Transverse colon (tissue), 4 donors: ENCODE measurements at regions of chr5 and their contacts with region 1.

Region 1: GRCh38 chr5:159993194-159993593 is 15.7 kb upstream of the TTC1 start:
- DNase-seq: no peak
- H3K4me3 ChIP-seq: no peak overlapping the region
- H3K27ac ChIP-seq: no peak overlapping the region
- H3K4me1 ChIP-seq: no peaks in the 10 kb centered on the region
- H3K27me3 ChIP-seq: peaks cover 20% of the 10 kb centered on the region
- CTCF ChIP-seq: no peak
- EP300 ChIP-seq: no peak
- POLR2A ChIP-seq: no peak

Region 2: DNA sequence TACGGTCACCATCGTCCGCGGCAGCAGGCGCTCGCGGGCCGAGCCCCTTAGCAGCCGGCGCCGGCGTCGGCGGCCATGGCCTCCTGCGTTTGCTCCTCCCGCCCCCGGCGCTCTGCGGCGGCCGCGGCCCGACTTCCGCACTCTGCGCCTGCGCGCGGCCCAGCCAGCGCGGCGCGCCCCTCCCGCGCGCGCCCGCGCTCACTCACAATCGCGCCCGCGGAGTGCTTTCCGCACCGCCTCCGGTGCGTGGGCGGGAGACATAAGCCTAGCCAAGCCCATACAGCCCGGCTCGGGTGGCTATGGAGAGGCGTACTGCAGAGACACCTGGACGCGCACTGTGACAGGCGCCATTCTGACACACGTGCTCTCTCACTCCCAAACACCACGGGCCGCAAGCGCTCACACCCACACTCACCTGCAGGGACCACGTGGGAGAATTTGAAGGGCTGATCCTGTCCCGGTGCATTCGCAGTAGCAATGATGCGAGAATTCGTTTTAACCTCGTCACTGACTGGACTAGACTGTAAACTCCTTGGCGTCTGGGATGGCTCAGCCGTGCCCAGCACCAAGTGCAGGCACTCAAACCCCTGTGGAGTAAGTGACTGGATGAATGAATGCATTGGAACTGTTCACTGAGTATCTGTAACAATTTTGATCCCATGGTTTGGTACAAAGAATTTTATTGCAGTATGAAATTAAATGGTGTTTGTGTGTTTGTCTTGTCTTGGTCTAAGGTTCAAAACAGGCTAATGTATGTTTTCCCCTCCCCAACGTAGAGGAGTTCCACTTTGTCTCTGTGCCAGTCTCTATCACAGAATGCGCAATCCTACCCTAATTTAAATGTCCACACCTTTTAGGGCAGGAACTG is 783.5 kb before region 1 on chr5 and contains the start of gene RNF145:
- in situ Hi-C with region 1: no loop called
- intact Hi-C with region 1: no loop called
- DNase-seq: peak; percentile 89
- H3K4me3 ChIP-seq: peak within 1 kb of the TSS; percentile 89 to 99 (median 98)
- H3K27ac ChIP-seq: peak within 1 kb of the TSS; percentile 96 to 99 (median 98)
- H3K4me1 ChIP-seq: peaks cover 17 to 56% (median 42%) of the 10 kb centered on the region in 4 donors
- H3K27me3 ChIP-seq: no peaks in the 10 kb centered on the region
- CTCF ChIP-seq: no peak
- EP300 ChIP-seq: no peak
- POLR2A ChIP-seq: peak; percentile 54
- total RNA-seq, gene RNF145: 11.5 to 59.4 (median 29.2) TPM

Region 3: DNA sequence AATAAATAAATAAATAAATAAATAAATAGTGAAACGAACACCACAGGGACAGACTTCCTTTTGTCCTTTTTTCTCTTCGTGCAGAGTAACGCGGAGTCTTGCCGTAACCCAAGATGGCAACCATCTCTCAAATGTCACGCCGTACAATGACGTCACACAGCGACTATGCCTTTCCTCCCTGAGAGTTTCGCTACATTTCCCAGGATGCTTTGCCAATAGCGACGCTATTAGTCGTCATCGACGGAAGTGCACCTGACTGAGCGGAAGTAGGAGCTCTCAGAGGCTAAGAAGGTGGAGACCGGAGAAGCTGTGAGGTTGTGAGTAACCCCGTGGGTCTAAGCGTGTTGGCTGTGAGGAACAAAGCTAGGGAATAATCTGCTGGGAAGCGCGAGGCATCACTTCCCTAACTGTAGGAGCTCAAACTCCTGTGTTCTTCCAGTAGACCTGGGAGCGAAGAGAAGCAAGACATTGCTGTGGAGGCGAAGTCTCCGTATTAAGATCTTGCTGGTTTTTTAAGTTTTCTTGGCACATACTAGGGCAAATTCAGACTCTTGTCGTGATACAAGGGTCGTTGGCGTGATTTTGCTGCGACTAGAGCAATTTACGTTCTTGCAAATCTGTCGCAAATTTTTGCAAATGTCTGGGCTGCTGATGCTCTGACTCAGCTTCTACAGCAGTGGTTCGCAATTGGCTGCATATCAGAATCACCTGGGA is 15.8 kb after region 1 on chr5 and contains the start of gene TTC1:
- in situ Hi-C with region 1: no loop called
- intact Hi-C with region 1: loop called (anchors 1 kb)
- DNase-seq: peak; percentile 97
- H3K4me3 ChIP-seq: peak within 1 kb of the TSS; percentile 71 to 89 (median 79)
- H3K27ac ChIP-seq: peak within 1 kb of the TSS; percentile 89 to 95 (median 92)
- H3K4me1 ChIP-seq: peaks cover 15 to 43% (median 36%) of the 10 kb centered on the region in 4 donors
- H3K27me3 ChIP-seq: no peaks in the 10 kb centered on the region
- CTCF ChIP-seq: no peak
- EP300 ChIP-seq: peak; percentile 37
- POLR2A ChIP-seq: peak; percentile 95
- total RNA-seq, gene TTC1: 5.8 to 42.2 (median 24.8) TPM